Kidney (tissue), 22 donors: ENCODE measurements at regions of chr15 and their contacts with region 1.

Region 1: DNA sequence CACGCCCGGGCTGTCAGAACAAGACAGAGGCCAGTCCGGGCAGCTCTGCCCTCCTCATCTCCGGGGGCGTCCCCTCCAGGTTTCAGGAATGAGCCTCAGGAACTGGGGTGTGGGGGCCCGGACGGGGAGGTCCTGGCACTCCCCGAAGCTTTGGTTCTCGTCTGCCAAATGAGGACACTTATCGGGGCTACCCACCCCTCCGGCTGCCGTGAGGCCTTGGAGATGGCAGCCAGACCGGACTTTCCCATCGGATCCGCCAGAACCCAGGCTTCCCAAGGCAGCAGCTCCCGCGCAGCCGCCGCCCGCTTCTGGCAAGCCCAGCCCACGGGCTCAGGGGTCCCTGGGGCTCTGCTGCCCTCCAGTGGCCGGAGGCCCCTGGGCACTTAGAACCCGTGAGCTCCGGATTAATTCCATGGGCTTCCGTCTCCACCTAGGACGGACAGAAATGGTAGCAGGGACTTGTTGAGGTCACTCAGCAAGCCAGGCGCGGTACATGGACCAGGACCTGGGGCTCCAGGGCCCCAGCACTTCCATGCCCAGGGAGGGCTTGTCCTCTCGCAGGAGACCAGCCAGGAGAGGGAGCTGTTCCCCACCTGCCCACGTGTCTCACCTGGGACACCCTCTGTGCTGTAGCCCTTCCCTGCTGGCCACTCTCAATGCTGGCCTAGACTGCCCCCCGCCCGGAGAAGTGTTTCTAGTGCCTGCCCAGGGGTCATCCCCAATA is 89.4 kb downstream of the LINGO1 start:
- DNase-seq: peak; percentile 87 to 95 (median 91)
- H3K4me3 ChIP-seq: peak overlapping the region in 2 of 3 donors; percentile 55 to 56
- H3K27ac ChIP-seq: no peak overlapping the region
- H3K4me1 ChIP-seq: peaks cover 0 to 5% (median 3%) of the 10 kb centered on the region in 3 donors
- H3K27me3 ChIP-seq: no peaks in the 10 kb centered on the region
- CTCF ChIP-seq: peak; percentile 83

Region 2: GRCh38 chr15:77024271-77025082 is 518.8 kb before region 1 on chr15:
- intact Hi-C with region 1: loop called (anchors 5 kb)
- DNase-seq: peak; percentile 61 to 86 (median 78)
- H3K4me3 ChIP-seq: no peak overlapping the region
- H3K27ac ChIP-seq: no peak overlapping the region
- H3K4me1 ChIP-seq: peaks cover 0 to 5% (median 0%) of the 10 kb centered on the region in 3 donors
- H3K27me3 ChIP-seq: no peaks in the 10 kb centered on the region
- CTCF ChIP-seq: peak; percentile 84

Region 3: DNA sequence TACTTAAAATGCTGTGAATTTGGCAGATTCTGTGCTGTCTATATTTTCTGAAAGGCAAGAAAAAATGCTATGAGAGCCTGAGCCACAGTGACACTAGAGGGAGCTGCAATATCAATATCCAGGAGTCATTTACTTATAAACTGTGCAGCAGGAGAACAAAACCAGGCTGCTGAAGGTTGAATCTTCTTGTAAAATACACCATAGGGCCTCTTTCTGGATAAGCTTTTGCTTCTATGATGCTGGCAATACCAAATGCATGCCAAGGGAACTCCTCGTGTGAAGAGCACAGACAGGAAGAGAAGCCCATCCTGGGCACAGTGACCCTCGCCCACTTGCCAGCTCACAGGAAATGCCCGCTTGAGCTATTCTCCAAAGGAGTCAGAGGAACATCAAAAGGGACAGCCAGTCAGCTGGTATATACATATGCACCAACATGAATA is 424.4 kb before region 1 on chr15:
- intact Hi-C with region 1: loop called (anchors 10 kb)
- DNase-seq: peak in 3 of 5 donors; percentile 60 to 90 (median 83)
- H3K4me3 ChIP-seq: no peak overlapping the region
- H3K27ac ChIP-seq: no peak overlapping the region
- H3K4me1 ChIP-seq: no peaks in the 10 kb centered on the region
- H3K27me3 ChIP-seq: no peaks in the 10 kb centered on the region
- CTCF ChIP-seq: peak; percentile 88